Transverse colon (tissue), 4 donors: ENCODE measurements at regions of chr7 and their contacts with region 1.

Region 1: DNA sequence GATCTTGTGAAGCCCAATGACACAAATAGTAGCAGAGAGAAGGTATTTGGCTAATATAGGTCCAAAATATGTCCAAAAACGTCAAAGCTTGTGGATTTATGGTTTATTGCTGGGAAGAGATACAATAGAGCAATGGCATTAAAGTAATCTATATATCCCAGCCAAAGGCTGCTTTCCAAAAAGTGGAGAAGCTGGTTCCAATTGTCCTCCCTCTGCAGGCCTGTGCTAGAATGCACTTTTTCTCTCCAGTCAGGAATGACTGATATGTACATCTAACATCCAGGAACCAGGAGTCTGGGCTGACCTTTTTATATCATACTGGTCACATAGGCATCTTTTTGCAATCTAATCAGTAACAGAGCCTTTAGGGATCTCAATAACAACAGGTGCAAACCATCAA is 167.1 kb upstream of the FAM3C start:
- DNase-seq: no peak
- H3K4me3 ChIP-seq: no peak overlapping the region
- H3K27ac ChIP-seq: no peak overlapping the region
- H3K4me1 ChIP-seq: peaks cover 0 to under 1% (median 0%) of the 10 kb centered on the region in 4 donors
- H3K27me3 ChIP-seq: no peaks in the 10 kb centered on the region
- CTCF ChIP-seq: peak in 2 of 5 experiments; percentile 7 to 19
- EP300 ChIP-seq: no peak
- POLR2A ChIP-seq: no peak

Region 2: GRCh38 chr7:121138262-121138933 is 424.8 kb before region 1 on chr7:
- in situ Hi-C with region 1: loop called in 1 of 4 experiments (anchors 25 kb)
- intact Hi-C with region 1: no loop called
- DNase-seq: peak; percentile 14
- H3K4me3 ChIP-seq: no peak overlapping the region
- H3K27ac ChIP-seq: no peak overlapping the region
- H3K4me1 ChIP-seq: no peaks in the 10 kb centered on the region
- H3K27me3 ChIP-seq: no peaks in the 10 kb centered on the region
- CTCF ChIP-seq: no peak
- EP300 ChIP-seq: no peak
- POLR2A ChIP-seq: no peak